Activated CD4-positive, alpha-beta T cell treated with anti-CD3 and anti-CD28 coated beads, Interleukin-2, amount 10 ng/mL, durations not matched to agents 7 days and 5 days (primary cell): ENCODE measurements at regions of chr18 and their contacts with region 1.

Region 1: DNA sequence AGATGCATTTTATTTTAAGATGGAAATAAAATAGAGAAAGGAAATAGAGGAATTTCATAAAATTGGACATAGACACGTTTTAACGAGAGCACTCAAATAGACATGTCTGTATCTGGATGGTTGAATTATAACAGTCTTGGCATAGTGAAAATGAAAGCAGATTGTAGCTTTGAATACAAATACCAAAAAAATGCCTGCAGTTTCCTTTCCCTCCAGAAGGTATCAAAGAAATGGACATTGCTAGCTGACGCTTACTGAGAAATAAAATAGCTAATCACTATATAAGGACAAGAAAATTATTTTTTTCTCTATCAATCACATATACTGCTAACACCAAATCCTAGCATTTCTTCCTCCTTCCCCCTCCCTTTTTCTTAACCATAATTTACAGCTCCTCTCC is 11.4 kb upstream of the MAPRE2 start:
- DNase-seq: no peak
- H3K4me3 Mint-ChIP-seq: peak overlapping the region; percentile 63
- H3K27ac Mint-ChIP-seq: peak overlapping the region; percentile 97
- H3K4me1 Mint-ChIP-seq: peaks cover 56% of the 10 kb centered on the region
- H3K27me3 Mint-ChIP-seq: no peaks in the 10 kb centered on the region

Region 2: GRCh38 chr18:34723143-34723542 is 306.6 kb before region 1 on chr18:
- CTCF ChIA-PET with region 1: no interaction called
- POLR2A ChIA-PET with region 1: no interaction called
- DNase-seq: no peak
- H3K4me3 Mint-ChIP-seq: no peak overlapping the region
- H3K27ac Mint-ChIP-seq: no peak overlapping the region
- H3K4me1 Mint-ChIP-seq: no peaks in the 10 kb centered on the region
- H3K27me3 Mint-ChIP-seq: peaks cover 9% of the 10 kb centered on the region

Region 3: GRCh38 chr18:35040988-35041814 is 11.4 kb after region 1 on chr18 and contains the start of gene MAPRE2:
- CTCF ChIA-PET with region 1: interaction called, 30 read pairs
- POLR2A ChIA-PET with region 1: interaction called, 11 read pairs
- DNase-seq: peak; percentile 99
- H3K4me3 Mint-ChIP-seq: peak within 1 kb of the TSS; percentile 89
- H3K27ac Mint-ChIP-seq: peak within 1 kb of the TSS; percentile 95
- H3K4me1 Mint-ChIP-seq: peaks cover 50% of the 10 kb centered on the region
- H3K27me3 Mint-ChIP-seq: no peaks in the 10 kb centered on the region
- total RNA-seq, gene MAPRE2: 48.6 to 61.9 TPM

Region 4: GRCh38 chr18:35271656-35272055 is 241.9 kb after region 1 on chr18:
- CTCF ChIA-PET with region 1: no interaction called
- POLR2A ChIA-PET with region 1: no interaction called
- DNase-seq: no peak
- H3K4me3 Mint-ChIP-seq: no peak overlapping the region
- H3K27ac Mint-ChIP-seq: no peak overlapping the region
- H3K4me1 Mint-ChIP-seq: peaks cover 17% of the 10 kb centered on the region
- H3K27me3 Mint-ChIP-seq: no peaks in the 10 kb centered on the region